Endothelial cell of umbilical vein (primary cell): ENCODE measurements at regions of chr12 and their contacts with region 1.

Region 1: DNA sequence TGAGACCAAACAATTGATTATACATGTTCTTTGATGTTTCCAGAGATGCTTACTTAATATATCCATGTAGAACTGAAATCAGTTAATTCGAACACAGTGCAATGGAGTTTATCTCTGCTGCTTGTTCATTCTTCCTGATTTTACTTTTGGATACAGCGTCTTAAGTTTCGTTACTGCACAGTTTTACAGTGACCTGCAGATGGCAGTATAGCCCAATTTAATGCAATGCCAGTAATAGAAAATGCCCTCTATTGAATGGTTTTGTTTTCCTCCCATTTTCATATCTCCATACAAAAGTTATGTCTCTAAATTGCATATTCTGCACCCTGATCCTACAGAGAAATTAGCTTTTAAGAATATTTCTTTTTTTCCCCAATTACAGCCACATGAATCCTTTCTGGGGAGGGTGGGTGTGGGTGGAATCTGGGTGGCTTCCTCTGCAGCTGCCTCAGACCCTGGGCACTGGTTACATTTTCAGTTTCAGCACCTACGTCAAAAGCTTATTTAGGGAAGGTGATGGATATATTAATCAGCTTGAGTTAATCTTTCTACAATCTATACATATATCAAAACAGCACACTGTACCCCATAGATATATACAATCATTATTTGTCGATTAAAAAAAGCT is 101.1 kb upstream of the DCD start:
- DNase-seq: peak; percentile 41
- H3K4me3 ChIP-seq: no peak overlapping the region
- H3K27ac ChIP-seq: no peak overlapping the region
- H3K4me1 ChIP-seq: no peaks in the 10 kb centered on the region
- H3K27me3 ChIP-seq: peaks cover 0 to 2% of the 10 kb centered on the region in 2 experiments
- CTCF ChIP-seq: peak; percentile 53 to 57
- POLR2A ChIP-seq: no peak

Region 2: GRCh38 chr12:54486173-54486867 is 263.0 kb before region 1 on chr12:
- CTCF ChIA-PET with region 1: no interaction called
- POLR2A ChIA-PET with region 1: no interaction called
- dilution Hi-C with region 1: no loop called
- intact Hi-C with region 1: no loop called
- DNase-seq: no peak
- H3K4me3 ChIP-seq: no peak overlapping the region
- H3K27ac ChIP-seq: no peak overlapping the region
- H3K4me1 ChIP-seq: no peaks in the 10 kb centered on the region
- H3K27me3 ChIP-seq: peaks cover 5 to 9% of the 10 kb centered on the region in 2 experiments
- CTCF ChIP-seq: no peak
- POLR2A ChIP-seq: no peak

Region 3: GRCh38 chr12:54701940-54702592 is 47.2 kb before region 1 on chr12:
- CTCF ChIA-PET with region 1: interaction called, 13 read pairs
- POLR2A ChIA-PET with region 1: no interaction called
- dilution Hi-C with region 1: no loop called
- intact Hi-C with region 1: no loop called
- DNase-seq: peak; percentile 28
- H3K4me3 ChIP-seq: no peak overlapping the region
- H3K27ac ChIP-seq: no peak overlapping the region
- H3K4me1 ChIP-seq: no peaks in the 10 kb centered on the region
- H3K27me3 ChIP-seq: peaks cover 3 to 7% of the 10 kb centered on the region in 2 experiments
- CTCF ChIP-seq: peak; percentile 41 to 46
- POLR2A ChIP-seq: no peak

Region 4: GRCh38 chr12:54734196-54734950 is 14.9 kb before region 1 on chr12:
- CTCF ChIA-PET with region 1: interaction called, 11 read pairs
- POLR2A ChIA-PET with region 1: no interaction called
- dilution Hi-C with region 1: no loop called
- intact Hi-C with region 1: no loop called
- DNase-seq: no peak
- H3K4me3 ChIP-seq: no peak overlapping the region
- H3K27ac ChIP-seq: no peak overlapping the region
- H3K4me1 ChIP-seq: no peaks in the 10 kb centered on the region
- H3K27me3 ChIP-seq: no peaks in the 10 kb centered on the region
- CTCF ChIP-seq: no peak
- POLR2A ChIP-seq: no peak

Region 5: GRCh38 chr12:54759751-54760150 is 10.4 kb after region 1 on chr12:
- CTCF ChIA-PET with region 1: interaction called, 21 read pairs
- POLR2A ChIA-PET with region 1: no interaction called
- dilution Hi-C with region 1: no loop called
- intact Hi-C with region 1: no loop called
- DNase-seq: no peak
- H3K4me3 ChIP-seq: no peak overlapping the region
- H3K27ac ChIP-seq: no peak overlapping the region
- H3K4me1 ChIP-seq: no peaks in the 10 kb centered on the region
- H3K27me3 ChIP-seq: no peaks in the 10 kb centered on the region
- CTCF ChIP-seq: peak in 1 of 2 donors; percentile 6
- POLR2A ChIP-seq: no peak

Region 6: GRCh38 chr12:54853995-54854566 is 104.8 kb after region 1 on chr12 and contains the start of gene MUCL1:
- CTCF ChIA-PET with region 1: no interaction called
- POLR2A ChIA-PET with region 1: no interaction called
- dilution Hi-C with region 1: no loop called
- intact Hi-C with region 1: loop called (anchors 1 kb)
- DNase-seq: peak; percentile 69
- H3K4me3 ChIP-seq: no peak within 1 kb of the TSS
- H3K27ac ChIP-seq: no peak within 1 kb of the TSS
- H3K4me1 ChIP-seq: no peaks in the 10 kb centered on the region
- H3K27me3 ChIP-seq: peaks cover 3 to 11% of the 10 kb centered on the region in 2 experiments
- CTCF ChIP-seq: peak; percentile 73 to 81
- POLR2A ChIP-seq: no peak
- total RNA-seq, gene MUCL1: not detected in 2 replicates